ENCODE measurements at regions of chr18 and their contacts with region 1.

Region 1: DNA sequence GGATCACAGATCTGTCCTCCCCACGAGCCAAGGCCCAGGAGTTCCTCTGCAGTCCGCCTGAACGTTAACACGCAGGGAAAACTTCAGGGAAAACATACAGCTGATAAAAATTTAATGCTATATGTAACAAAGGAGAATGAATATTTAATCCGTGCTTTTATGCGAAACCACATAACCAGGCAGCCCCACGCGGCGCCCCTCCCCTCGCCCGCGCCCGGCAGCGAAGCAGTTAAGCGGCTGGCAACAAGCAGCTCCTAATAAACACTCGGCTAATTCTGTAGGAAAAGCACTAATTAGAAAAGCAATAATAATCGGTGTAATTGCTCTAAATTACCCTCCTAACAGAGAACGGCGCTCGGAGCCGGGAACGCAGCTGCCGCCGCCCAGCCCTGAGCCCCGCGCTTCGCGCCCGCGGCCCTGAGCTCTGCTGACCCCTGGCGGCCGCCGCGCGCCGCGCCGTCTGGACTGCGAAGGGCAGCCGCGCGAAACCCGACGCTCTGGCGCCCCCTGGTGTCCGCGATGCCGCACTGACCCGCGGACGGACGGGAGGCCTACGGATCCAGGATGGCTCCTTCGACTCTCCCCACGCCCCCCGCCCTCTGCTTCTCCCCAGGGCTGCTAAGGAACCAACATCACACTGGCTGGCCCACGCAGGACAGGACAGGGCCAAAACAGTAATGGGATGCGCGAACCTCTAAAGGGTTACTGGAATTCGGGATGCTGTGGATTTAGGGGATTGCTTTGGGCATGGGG is 181.4 kb downstream of the SMAD2 start:
- DNase-seq: peak; percentile 85 to 92
- ATAC-seq: peak; percentile 98 to 100 (median 100)
- H3K4me3 ChIP-seq: no peak overlapping the region
- H3K4me3 Mint-ChIP-seq: peak overlapping the region; percentile 21
- H3K27ac ChIP-seq: no peak overlapping the region
- H3K27ac Mint-ChIP-seq: no peak overlapping the region
- H3K4me1 ChIP-seq: peaks cover 8% of the 10 kb centered on the region
- H3K4me1 Mint-ChIP-seq: peaks cover 6% of the 10 kb centered on the region in 2 donors
- H3K27me3 ChIP-seq: peaks cover 11% of the 10 kb centered on the region
- H3K27me3 Mint-ChIP-seq: peaks cover 0 to 4% of the 10 kb centered on the region in 2 donors
- CTCF ChIP-seq: peak; percentile 100

Region 2: DNA sequence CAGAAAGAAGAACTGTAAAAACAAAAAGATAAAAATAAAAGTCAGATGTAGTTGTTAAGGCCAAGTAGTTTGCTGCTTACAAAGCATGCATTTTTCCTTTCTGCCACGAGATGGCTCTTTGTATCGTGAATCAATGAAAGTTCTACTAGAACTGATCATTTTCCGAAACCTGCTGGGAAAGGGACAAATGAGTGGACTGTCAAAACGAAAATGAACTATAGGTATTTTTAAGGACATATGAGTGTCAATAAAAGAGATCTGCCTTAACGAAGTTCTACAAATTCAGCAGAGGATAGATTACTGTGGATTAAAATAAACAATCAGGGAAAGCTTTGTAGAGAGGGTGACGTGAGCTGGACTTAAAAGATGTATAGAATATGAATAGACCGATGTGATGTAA is 698.6 kb before region 1 on chr18:
- intact Hi-C with region 1: loop called (anchors 2 kb)
- DNase-seq: peak in 1 of 2 donors; percentile 56
- ATAC-seq: no peak
- H3K4me3 ChIP-seq: no peak overlapping the region
- H3K4me3 Mint-ChIP-seq: no peak overlapping the region
- H3K27ac ChIP-seq: no peak overlapping the region
- H3K27ac Mint-ChIP-seq: no peak overlapping the region
- H3K4me1 ChIP-seq: no peaks in the 10 kb centered on the region
- H3K4me1 Mint-ChIP-seq: no peaks in the 10 kb centered on the region
- H3K27me3 ChIP-seq: no peaks in the 10 kb centered on the region
- H3K27me3 Mint-ChIP-seq: peaks cover 0 to 8% of the 10 kb centered on the region in 2 donors
- CTCF ChIP-seq: peak; percentile 61

Region 3: GRCh38 chr18:47100214-47100831 is 648.7 kb before region 1 on chr18:
- intact Hi-C with region 1: loop called (anchors 1 kb)
- DNase-seq: peak; percentile 28 to 72
- ATAC-seq: peak in 2 of 3 donors; percentile 42 to 67
- H3K4me3 ChIP-seq: no peak overlapping the region
- H3K4me3 Mint-ChIP-seq: no peak overlapping the region
- H3K27ac ChIP-seq: no peak overlapping the region
- H3K27ac Mint-ChIP-seq: no peak overlapping the region
- H3K4me1 ChIP-seq: no peaks in the 10 kb centered on the region
- H3K4me1 Mint-ChIP-seq: no peaks in the 10 kb centered on the region
- H3K27me3 ChIP-seq: no peaks in the 10 kb centered on the region
- H3K27me3 Mint-ChIP-seq: no peaks in the 10 kb centered on the region
- CTCF ChIP-seq: peak; percentile 61

Measured in natural killer cell (primary cell).